K562 (cell line): ENCODE measurements at regions of chr17 and their contacts with region 1.

Region 1: DNA sequence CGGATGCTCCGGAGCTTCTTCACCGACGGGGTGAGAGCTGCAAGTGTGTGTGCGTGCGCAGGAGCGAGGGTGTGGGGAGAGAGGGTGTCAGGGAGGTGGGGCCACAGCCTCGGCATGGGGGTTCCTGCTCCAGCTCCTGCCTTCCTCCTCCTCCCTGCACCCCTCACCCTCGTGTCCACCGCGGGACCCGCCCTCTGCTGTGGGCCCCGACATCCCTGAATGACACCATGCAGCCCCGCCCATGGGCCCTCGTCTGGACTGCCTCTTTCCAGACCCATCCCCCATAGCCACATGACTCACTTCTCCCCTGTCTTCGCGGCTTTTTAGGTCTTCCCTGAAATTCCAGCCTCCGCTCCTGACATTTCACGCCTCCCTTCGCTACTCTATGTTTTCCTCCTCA is 41.6 kb downstream of the ARHGAP23 start:
- DNase-seq: peak; percentile 26 to 63 (median 51)
- ATAC-seq: no peak
- H3K4me3 ChIP-seq: no peak overlapping the region
- H3K27ac ChIP-seq: no peak overlapping the region
- H3K4me1 ChIP-seq: peaks cover 5 to 37% of the 10 kb centered on the region in 2 experiments; a peak in 4 of 5 replicates
- H3K27me3 ChIP-seq: peaks cover 0 to 19% of the 10 kb centered on the region in 2 experiments; a peak in 2 of 5 replicates
- CTCF ChIP-seq: no peak
- EP300 ChIP-seq: no peak
- POLR2A ChIP-seq: no peak
- RAD21 ChIP-seq: no peak

Region 2: GRCh38 chr17:38444151-38444550 is 25.7 kb before region 1 on chr17:
- CTCF ChIA-PET with region 1: interaction called, 4 read pairs
- POLR2A ChIA-PET with region 1: no interaction called
- in situ Hi-C with region 1: no loop called
- intact Hi-C with region 1: loop called (anchors 1 kb)
- DNase-seq: peak; percentile 71 to 83 (median 80)
- ATAC-seq: peak; percentile 96
- H3K4me3 ChIP-seq: no peak overlapping the region
- H3K27ac ChIP-seq: no peak overlapping the region
- H3K4me1 ChIP-seq: peaks cover 0 to 8% of the 10 kb centered on the region in 2 experiments; a peak in 2 of 5 replicates
- H3K27me3 ChIP-seq: peaks cover 5 to 26% of the 10 kb centered on the region in 2 experiments; a peak in 3 of 5 replicates
- CTCF ChIP-seq: peak; percentile 88 to 92 (median 91)
- EP300 ChIP-seq: no peak
- POLR2A ChIP-seq: no peak
- RAD21 ChIP-seq: peak; percentile 65 to 93